Ovary (tissue), 10 donors: ENCODE measurements at regions of chr15 and their contacts with region 1.

Region 1: GRCh38 chr15:78761891-78762385 is 49.3 kb downstream of the ADAMTS7 start:
- DNase-seq: peak in 2 of 5 donors; percentile 20 to 39
- H3K4me3 ChIP-seq: no peak overlapping the region
- H3K27ac ChIP-seq: no peak overlapping the region
- H3K4me1 ChIP-seq: peaks cover 21% of the 10 kb centered on the region
- H3K27me3 ChIP-seq: no peaks in the 10 kb centered on the region
- CTCF ChIP-seq: no peak
- EP300 ChIP-seq: no peak
- POLR2A ChIP-seq: no peak

Region 2: DNA sequence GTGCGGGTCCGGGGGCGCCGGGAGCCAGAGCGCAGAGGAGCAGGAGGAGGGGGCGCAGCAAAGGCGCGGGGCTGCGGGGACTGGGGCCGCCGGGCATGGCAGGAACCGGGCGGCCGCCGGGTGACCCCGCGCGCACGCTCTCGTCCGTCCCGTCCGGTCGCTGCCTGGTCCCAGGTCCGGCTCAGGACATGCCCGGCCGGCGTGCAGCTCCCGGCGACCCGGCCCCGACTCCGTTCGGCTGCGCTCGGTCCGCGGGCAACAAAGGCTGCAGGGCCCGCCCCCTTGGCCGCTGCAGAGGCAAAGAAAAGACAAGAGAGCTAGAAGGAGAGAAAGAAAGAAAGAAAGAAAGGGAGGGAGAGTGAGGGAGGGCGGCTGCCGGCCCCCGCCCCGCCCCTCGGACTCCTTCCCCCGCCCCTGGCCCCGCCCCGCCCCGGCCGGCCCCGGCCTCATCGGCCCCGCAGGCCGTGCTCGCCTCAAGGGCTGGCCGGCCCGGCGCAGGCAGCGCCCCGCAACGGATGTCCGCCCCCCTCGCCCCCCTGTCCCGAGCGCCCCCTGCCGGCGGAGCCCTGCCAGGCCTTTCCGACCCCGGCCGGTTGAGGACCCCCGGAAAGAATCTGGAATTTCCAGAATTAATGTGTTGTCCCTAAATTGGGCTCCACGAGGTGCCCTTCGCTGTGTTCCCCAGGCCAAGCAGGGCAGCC is 49.3 kb after region 1 on chr15 and contains the start of gene ADAMTS7:
- intact Hi-C with region 1: loop called in 1 of 4 experiments (anchors 5 kb)
- DNase-seq: peak; percentile 81 to 88 (median 86)
- H3K4me3 ChIP-seq: peak within 1 kb of the TSS; percentile 51
- H3K27ac ChIP-seq: peak within 1 kb of the TSS; percentile 62 to 73
- H3K4me1 ChIP-seq: peaks cover 3% of the 10 kb centered on the region
- H3K27me3 ChIP-seq: no peaks in the 10 kb centered on the region
- CTCF ChIP-seq: peak; percentile 38 to 76 (median 73)
- EP300 ChIP-seq: no peak
- POLR2A ChIP-seq: no peak
- total RNA-seq, gene ADAMTS7: 3.5 to 16.5 (median 8.8) TPM